Breast epithelium (tissue), 4 donors: ENCODE measurements at regions of chr5 and their contacts with region 1.

Region 1: DNA sequence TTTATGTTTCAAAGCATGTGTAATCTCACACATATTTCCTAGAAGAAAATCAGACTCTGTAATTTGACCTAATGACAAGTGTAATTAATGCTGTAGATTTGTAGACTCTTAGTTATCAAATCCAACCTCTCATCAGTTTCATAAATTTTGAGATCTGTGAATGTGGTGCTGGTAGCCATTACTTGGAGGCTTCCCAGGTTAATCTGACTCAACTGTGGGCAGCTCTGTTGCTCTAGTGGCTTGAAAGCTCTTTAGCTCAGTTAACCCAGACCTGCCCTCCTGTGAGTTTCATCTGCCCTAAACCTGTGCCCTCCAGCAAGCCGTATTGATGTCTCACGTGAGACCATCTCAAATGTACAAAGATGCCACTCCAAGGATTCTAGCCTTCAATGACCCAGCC is 323.4 kb downstream of the FBXL7 start:
- DNase-seq: no peak
- H3K4me3 ChIP-seq: no peak overlapping the region
- H3K27ac ChIP-seq: no peak overlapping the region
- H3K4me1 ChIP-seq: no peaks in the 10 kb centered on the region
- H3K27me3 ChIP-seq: no peaks in the 10 kb centered on the region
- CTCF ChIP-seq: no peak
- POLR2A ChIP-seq: no peak

Region 2: DNA sequence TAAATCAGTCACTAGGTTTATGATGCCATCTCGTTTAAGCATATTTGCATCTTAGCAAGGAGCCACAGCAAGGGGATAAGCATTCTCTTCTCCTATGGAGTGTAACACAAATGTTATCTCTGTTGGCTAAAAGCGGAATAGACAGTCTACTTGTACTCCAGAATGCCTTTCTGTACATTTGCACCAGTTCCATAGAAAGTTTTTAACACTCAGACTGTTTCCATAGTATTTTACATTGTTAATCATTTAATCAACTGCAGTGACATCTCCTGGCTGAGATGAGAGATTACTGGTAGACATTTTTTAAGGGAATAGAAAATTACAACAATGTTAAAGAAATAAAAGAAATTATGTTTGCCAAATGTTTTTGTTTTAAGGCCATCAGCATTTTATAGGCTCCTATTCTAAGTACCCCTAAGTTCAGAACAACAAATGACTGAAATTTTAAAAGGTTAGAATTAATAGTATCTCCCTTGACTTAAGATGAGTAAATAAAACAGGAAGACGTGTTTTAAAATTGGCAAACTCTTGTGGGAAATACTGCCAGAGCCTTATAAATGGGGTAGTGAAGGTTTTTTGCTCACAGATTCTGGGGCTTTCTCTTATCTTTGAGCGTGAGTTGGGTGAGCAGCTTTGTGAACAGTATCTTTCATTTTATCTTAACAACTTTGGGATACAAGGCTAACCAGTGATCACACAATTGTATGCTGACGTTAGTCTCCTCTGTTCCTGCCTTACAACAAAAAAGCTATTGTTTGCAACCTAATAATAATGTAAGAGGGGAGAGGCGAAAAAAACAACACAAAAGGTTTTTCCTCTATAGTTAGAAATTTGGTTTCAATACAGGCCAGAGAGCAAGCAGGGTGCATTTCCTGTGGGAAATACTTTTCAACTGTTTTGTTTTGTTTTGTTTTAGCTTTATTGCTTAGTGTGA is 29.1 kb before region 1 on chr5:
- intact Hi-C with region 1: no loop called
- DNase-seq: no peak
- H3K4me3 ChIP-seq: no peak overlapping the region
- H3K27ac ChIP-seq: peak overlapping the region in 1 of 2 donors; percentile 53
- H3K4me1 ChIP-seq: peaks cover 4 to 9% of the 10 kb centered on the region in 2 donors
- H3K27me3 ChIP-seq: no peaks in the 10 kb centered on the region
- CTCF ChIP-seq: no peak
- POLR2A ChIP-seq: no peak

Region 3: GRCh38 chr5:15806613-15807012 is 16.8 kb before region 1 on chr5:
- intact Hi-C with region 1: loop called (anchors 1 kb)
- DNase-seq: no peak
- H3K4me3 ChIP-seq: no peak overlapping the region
- H3K27ac ChIP-seq: peak overlapping the region in 1 of 2 donors; percentile 38
- H3K4me1 ChIP-seq: no peaks in the 10 kb centered on the region
- H3K27me3 ChIP-seq: no peaks in the 10 kb centered on the region
- CTCF ChIP-seq: no peak
- POLR2A ChIP-seq: no peak